ENCODE measurements at regions of chr3 and their contacts with region 1.

Region 1: GRCh38 chr3:57816471-57817095 is 60.5 kb downstream of the SLMAP start:
- DNase-seq: no peak
- H3K4me3 ChIP-seq: no peak overlapping the region
- H3K4me3 Mint-ChIP-seq: no peak overlapping the region
- H3K27ac Mint-ChIP-seq: peak overlapping the region; percentile 24
- H3K4me1 ChIP-seq: peaks cover 39% of the 10 kb centered on the region
- H3K4me1 Mint-ChIP-seq: peaks cover 22% of the 10 kb centered on the region
- H3K27me3 ChIP-seq: no peaks in the 10 kb centered on the region
- H3K27me3 Mint-ChIP-seq: no peaks in the 10 kb centered on the region
- CTCF ChIP-seq: no peak

Region 2: DNA sequence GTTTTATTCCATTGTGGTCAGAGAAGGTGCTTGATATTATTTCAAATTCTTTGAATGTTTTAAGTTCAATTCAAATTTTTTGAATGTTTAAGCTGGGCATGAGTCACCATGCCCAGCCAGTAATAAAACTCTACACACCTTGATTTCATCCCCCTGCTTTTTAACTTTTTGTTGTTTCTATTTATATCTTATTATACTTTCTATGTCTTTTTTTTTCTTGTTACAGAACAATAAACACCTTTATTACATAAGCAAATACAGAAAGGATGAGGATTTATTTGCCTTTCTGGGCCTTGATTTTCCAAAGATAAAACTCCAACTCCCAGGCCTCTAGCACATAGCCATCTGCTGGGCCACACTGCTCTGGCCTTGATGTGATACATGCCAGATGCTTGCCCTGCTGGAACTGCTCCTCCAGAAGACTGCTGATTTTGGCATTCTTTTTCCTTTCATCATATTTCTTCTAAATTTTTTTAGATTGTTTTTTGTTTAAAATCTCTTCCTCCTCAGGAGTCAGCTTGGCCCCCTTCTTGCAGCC is 286.4 kb before region 1 on chr3:
- CTCF ChIA-PET with region 1: no interaction called
- POLR2A ChIA-PET with region 1: no interaction called
- intact Hi-C with region 1: no loop called
- DNase-seq: no peak
- H3K4me3 ChIP-seq: no peak overlapping the region
- H3K4me3 Mint-ChIP-seq: no peak overlapping the region
- H3K27ac Mint-ChIP-seq: peak overlapping the region; percentile 13
- H3K4me1 ChIP-seq: peaks cover 25% of the 10 kb centered on the region
- H3K4me1 Mint-ChIP-seq: peaks cover 36% of the 10 kb centered on the region
- H3K27me3 ChIP-seq: no peaks in the 10 kb centered on the region
- H3K27me3 Mint-ChIP-seq: no peaks in the 10 kb centered on the region
- CTCF ChIP-seq: no peak

Region 3: GRCh38 chr3:57803647-57804081 is 12.9 kb before region 1 on chr3:
- CTCF ChIA-PET with region 1: no interaction called
- POLR2A ChIA-PET with region 1: no interaction called
- intact Hi-C with region 1: loop called (anchors 2 kb)
- DNase-seq: peak in 1 of 2 experiments; percentile 27
- H3K4me3 ChIP-seq: no peak overlapping the region
- H3K4me3 Mint-ChIP-seq: peak overlapping the region; percentile 52
- H3K27ac Mint-ChIP-seq: peak overlapping the region; percentile 23
- H3K4me1 ChIP-seq: peaks cover 47% of the 10 kb centered on the region
- H3K4me1 Mint-ChIP-seq: peaks cover 44% of the 10 kb centered on the region
- H3K27me3 ChIP-seq: no peaks in the 10 kb centered on the region
- H3K27me3 Mint-ChIP-seq: no peaks in the 10 kb centered on the region
- CTCF ChIP-seq: no peak

Measured in Caco-2 (cell line).